ENCODE measurements at regions of chr20 and their contacts with region 1.

Region 1: GRCh38 chr20:56439771-56440291 is 27.8 kb downstream of the CASS4 start:
- DNase-seq: no peak
- H3K4me3 Mint-ChIP-seq: peak overlapping the region; percentile 65
- H3K27ac Mint-ChIP-seq: peak overlapping the region; percentile 95
- H3K4me1 Mint-ChIP-seq: peaks cover 39% of the 10 kb centered on the region
- H3K27me3 Mint-ChIP-seq: no peaks in the 10 kb centered on the region

Region 2: GRCh38 chr20:54995553-54995952 is 1444.3 kb before region 1 on chr20:
- intact Hi-C with region 1: no loop called
- DNase-seq: no peak
- H3K4me3 Mint-ChIP-seq: no peak overlapping the region
- H3K27ac Mint-ChIP-seq: no peak overlapping the region
- H3K4me1 Mint-ChIP-seq: no peaks in the 10 kb centered on the region
- H3K27me3 Mint-ChIP-seq: no peaks in the 10 kb centered on the region

Region 3: GRCh38 chr20:56229812-56230211 is 210.0 kb before region 1 on chr20:
- intact Hi-C with region 1: no loop called
- DNase-seq: no peak
- H3K4me3 Mint-ChIP-seq: no peak overlapping the region
- H3K27ac Mint-ChIP-seq: no peak overlapping the region
- H3K4me1 Mint-ChIP-seq: no peaks in the 10 kb centered on the region
- H3K27me3 Mint-ChIP-seq: no peaks in the 10 kb centered on the region

Region 4: DNA sequence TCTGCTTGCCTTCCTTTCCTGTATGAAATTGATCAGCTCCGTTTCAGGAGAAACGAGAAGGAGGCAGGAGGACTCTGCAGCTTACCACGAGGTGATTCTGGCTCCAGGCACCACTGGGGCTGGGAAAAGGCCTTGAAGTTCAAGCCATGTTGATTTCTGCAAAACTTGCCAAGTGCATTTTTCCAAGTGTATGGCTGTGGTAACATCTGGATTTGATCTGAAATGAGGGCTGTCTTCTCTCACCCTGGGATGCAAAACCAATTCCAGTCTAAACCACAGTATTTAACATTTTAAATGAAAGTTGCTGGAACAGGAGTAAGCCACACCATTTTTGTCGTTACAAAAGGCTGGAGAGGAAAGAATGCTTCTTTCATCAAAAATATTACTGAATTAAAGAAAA is 117.2 kb before region 1 on chr20:
- intact Hi-C with region 1: no loop called
- DNase-seq: no peak
- H3K4me3 Mint-ChIP-seq: no peak overlapping the region
- H3K27ac Mint-ChIP-seq: no peak overlapping the region
- H3K4me1 Mint-ChIP-seq: peaks cover 7% of the 10 kb centered on the region
- H3K27me3 Mint-ChIP-seq: peaks cover 3% of the 10 kb centered on the region

Region 5: DNA sequence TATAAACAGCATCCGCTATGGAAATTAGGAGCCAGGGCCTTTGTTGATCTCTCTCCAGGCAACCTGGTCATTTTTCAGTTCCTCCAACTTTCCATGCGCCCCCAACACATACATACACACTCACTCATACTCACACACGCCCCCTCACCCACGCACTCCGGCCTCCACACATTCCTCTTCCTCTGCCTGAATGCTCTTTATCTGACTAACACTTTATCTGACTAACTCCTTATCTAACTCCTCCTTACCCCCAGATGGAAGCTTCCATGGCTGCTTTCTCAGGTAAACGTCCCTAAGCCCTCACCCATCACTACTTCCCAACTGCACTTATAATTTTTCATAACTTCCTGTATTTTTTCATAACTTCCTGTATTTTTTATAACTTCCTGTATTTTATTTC is 10.3 kb before region 1 on chr20:
- intact Hi-C with region 1: loop called (anchors 1 kb)
- DNase-seq: no peak
- H3K4me3 Mint-ChIP-seq: peak overlapping the region; percentile 54
- H3K27ac Mint-ChIP-seq: peak overlapping the region; percentile 89
- H3K4me1 Mint-ChIP-seq: peaks cover 47% of the 10 kb centered on the region
- H3K27me3 Mint-ChIP-seq: no peaks in the 10 kb centered on the region

Region 6: DNA sequence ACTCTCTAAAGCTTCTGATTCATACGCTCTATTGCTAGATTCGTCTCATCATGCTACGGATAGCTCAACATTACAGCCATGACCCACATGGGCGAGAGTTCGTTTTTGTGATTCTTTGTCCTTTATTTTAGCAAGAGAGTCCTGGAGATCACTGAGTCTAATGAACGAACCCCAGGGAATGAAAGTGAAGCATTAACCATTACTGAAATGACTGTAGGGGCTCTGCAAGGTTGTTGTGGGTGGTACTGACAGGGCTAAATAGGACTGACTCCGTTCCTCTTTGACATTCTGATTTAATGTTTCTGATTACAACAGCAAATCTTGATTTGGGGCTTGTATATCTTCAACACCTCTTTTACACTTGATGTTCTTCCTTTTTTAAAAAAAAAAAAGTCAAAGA is 14.9 kb after region 1 on chr20:
- intact Hi-C with region 1: loop called (anchors 1 kb)
- DNase-seq: no peak
- H3K4me3 Mint-ChIP-seq: no peak overlapping the region
- H3K27ac Mint-ChIP-seq: peak overlapping the region; percentile 75
- H3K4me1 Mint-ChIP-seq: peaks cover 20% of the 10 kb centered on the region
- H3K27me3 Mint-ChIP-seq: no peaks in the 10 kb centered on the region

Region 7: GRCh38 chr20:56468316-56469082 is 28.7 kb after region 1 on chr20 and contains the start of gene RTF2:
- intact Hi-C with region 1: loop called (anchors 2 kb)
- DNase-seq: peak; percentile 95
- H3K4me3 Mint-ChIP-seq: peak within 1 kb of the TSS; percentile 99
- H3K27ac Mint-ChIP-seq: peak within 1 kb of the TSS; percentile 97
- H3K4me1 Mint-ChIP-seq: peaks cover 36% of the 10 kb centered on the region
- H3K27me3 Mint-ChIP-seq: no peaks in the 10 kb centered on the region
- total RNA-seq, gene RTF2: 103 and 107 TPM in 2 replicates